Activated CD8-positive, alpha-beta T cell treated with anti-CD3 and anti-CD28 coated beads for 36 hours (primary cell): ENCODE measurements at regions of chr20 and their contacts with region 1.

Region 1: GRCh38 chr20:49610701-49611538 is 43.0 kb upstream of the PTGIS start:
- DNase-seq: peak; percentile 83
- ATAC-seq: peak; percentile 81
- H3K4me3 Mint-ChIP-seq: peak overlapping the region; percentile 31
- H3K27ac Mint-ChIP-seq: no peak overlapping the region
- H3K4me1 Mint-ChIP-seq: peaks cover 20% of the 10 kb centered on the region
- H3K27me3 Mint-ChIP-seq: peaks cover 13% of the 10 kb centered on the region
- CTCF ChIP-seq: peak; percentile 99

Region 2: DNA sequence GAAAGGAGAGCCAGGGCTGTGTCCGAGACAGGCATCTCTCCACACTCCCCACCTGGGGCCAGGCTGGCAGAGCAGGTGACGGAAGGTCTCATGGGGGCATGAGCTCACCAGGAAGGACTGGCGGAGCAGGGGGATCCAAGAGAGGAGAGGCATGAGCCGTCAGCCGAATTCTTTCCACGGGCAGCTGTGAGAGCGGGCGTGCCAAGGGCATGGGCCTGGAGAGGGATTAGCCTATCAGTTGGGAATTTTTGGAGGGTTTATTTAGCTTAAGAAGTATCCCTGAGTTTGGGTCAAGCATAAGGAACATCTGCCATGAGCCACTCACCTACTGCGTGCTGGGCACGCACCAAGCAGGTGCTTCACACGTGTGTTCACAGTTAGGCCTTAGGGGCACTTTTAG is 272.9 kb before region 1 on chr20:
- CTCF ChIA-PET with region 1: interaction called, 14 read pairs
- POLR2A ChIA-PET with region 1: no interaction called
- intact Hi-C with region 1: loop called (anchors 10 kb)
- DNase-seq: no peak
- ATAC-seq: no peak
- H3K4me3 Mint-ChIP-seq: no peak overlapping the region
- H3K27ac Mint-ChIP-seq: no peak overlapping the region
- H3K4me1 Mint-ChIP-seq: no peaks in the 10 kb centered on the region
- H3K27me3 Mint-ChIP-seq: peaks cover 5% of the 10 kb centered on the region
- CTCF ChIP-seq: no peak

Region 3: GRCh38 chr20:49490702-49491110 is 120.2 kb before region 1 on chr20:
- CTCF ChIA-PET with region 1: no interaction called
- POLR2A ChIA-PET with region 1: no interaction called
- intact Hi-C with region 1: no loop called
- DNase-seq: no peak
- ATAC-seq: no peak
- H3K4me3 Mint-ChIP-seq: no peak overlapping the region
- H3K27ac Mint-ChIP-seq: no peak overlapping the region
- H3K4me1 Mint-ChIP-seq: no peaks in the 10 kb centered on the region
- H3K27me3 Mint-ChIP-seq: peaks cover 48% of the 10 kb centered on the region
- CTCF ChIP-seq: no peak

Region 4: DNA sequence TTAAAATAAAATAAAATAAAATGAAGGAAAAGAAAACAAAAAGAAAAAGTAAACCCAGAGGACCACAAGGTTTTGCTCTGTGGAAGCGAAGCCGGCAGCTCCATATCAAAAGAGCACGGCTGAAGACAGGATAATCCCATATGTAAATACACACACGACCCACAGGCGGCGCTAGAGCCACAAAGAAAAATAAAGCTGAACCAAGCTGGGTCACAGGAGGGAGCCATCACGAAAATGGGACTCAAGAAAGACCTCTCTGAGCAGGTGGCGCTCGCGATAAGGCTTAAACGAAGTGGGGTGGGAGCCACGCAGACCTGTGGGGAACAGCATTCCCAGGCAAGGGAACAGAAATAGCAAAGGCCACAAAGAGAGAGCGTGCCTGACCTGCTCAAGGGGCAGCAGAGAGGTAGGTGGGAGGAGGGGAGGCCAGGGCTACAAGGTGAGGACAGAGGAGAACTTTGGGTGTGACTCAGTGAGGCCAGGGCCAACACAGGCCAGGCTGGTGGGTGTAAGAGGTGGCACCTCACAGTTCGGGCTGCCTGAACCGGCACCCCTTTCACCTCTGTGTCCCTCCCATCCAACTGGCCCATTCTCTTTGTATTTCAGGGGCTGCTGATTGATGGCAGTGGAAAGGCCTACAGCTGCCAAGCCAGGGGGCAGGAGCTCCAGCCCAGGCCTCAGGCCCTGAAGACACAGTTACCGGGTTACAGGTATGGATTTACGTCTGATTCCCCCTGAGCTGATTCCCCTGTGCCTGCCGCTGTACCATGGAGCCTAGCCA is 69.0 kb before region 1 on chr20:
- CTCF ChIA-PET with region 1: interaction called, 438 read pairs
- POLR2A ChIA-PET with region 1: interaction called, 12 read pairs
- intact Hi-C with region 1: loop called (anchors 2 kb)
- DNase-seq: peak; percentile 85
- ATAC-seq: peak; percentile 88
- H3K4me3 Mint-ChIP-seq: no peak overlapping the region
- H3K27ac Mint-ChIP-seq: peak overlapping the region; percentile 88
- H3K4me1 Mint-ChIP-seq: peaks cover 16% of the 10 kb centered on the region
- H3K27me3 Mint-ChIP-seq: peaks cover 13% of the 10 kb centered on the region
- CTCF ChIP-seq: peak; percentile 97

Region 5: DNA sequence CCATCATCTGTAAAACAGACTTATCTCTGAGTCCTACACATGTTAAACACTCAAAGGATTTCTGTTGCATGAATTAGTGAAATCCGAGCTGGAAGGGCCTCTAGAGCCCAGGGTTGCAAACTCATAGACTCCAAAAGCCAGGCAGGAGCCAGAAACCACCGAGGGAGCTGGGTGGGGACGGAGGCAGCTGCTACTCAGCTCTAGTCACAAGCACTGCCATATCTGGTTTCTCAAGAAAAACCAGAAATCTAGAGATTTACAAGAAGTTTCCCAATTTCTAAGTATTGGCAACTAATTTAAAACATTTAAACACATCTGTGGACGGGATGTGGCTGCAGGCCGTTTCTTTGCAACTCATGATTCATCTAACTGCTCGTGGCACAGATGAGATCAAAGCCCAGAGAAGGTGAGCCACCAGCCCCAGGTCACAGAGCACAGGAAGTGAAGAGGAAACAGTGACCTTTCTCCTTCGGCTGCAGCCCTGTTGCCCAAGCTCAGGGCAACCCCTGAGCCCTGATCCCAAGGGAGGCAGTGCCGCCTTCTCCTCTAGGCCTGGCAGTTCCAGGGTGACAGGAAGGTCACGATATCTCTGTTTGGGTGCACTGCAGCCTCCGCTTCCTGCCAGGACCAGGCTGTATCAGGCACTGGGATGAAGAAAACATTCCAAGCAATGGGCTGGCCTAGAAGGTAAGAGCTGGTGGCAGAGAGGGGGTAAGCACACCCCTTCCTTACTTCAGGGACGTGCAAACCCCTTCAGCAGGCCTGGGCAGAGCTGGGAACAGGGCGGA is 16.6 kb before region 1 on chr20:
- CTCF ChIA-PET with region 1: interaction called, 41 read pairs
- POLR2A ChIA-PET with region 1: interaction called, 10 read pairs
- intact Hi-C with region 1: no loop called
- DNase-seq: peak; percentile 94
- ATAC-seq: peak; percentile 57
- H3K4me3 Mint-ChIP-seq: peak overlapping the region; percentile 85
- H3K27ac Mint-ChIP-seq: peak overlapping the region; percentile 96
- H3K4me1 Mint-ChIP-seq: peaks cover 85% of the 10 kb centered on the region
- H3K27me3 Mint-ChIP-seq: no peaks in the 10 kb centered on the region
- CTCF ChIP-seq: no peak

Region 6: GRCh38 chr20:49656304-49656703 is 45.4 kb after region 1 on chr20:
- CTCF ChIA-PET with region 1: no interaction called
- POLR2A ChIA-PET with region 1: no interaction called
- intact Hi-C with region 1: no loop called
- DNase-seq: no peak
- ATAC-seq: no peak
- H3K4me3 Mint-ChIP-seq: no peak overlapping the region
- H3K27ac Mint-ChIP-seq: no peak overlapping the region
- H3K4me1 Mint-ChIP-seq: peaks cover 9% of the 10 kb centered on the region
- H3K27me3 Mint-ChIP-seq: no peaks in the 10 kb centered on the region
- CTCF ChIP-seq: no peak

Region 7: DNA sequence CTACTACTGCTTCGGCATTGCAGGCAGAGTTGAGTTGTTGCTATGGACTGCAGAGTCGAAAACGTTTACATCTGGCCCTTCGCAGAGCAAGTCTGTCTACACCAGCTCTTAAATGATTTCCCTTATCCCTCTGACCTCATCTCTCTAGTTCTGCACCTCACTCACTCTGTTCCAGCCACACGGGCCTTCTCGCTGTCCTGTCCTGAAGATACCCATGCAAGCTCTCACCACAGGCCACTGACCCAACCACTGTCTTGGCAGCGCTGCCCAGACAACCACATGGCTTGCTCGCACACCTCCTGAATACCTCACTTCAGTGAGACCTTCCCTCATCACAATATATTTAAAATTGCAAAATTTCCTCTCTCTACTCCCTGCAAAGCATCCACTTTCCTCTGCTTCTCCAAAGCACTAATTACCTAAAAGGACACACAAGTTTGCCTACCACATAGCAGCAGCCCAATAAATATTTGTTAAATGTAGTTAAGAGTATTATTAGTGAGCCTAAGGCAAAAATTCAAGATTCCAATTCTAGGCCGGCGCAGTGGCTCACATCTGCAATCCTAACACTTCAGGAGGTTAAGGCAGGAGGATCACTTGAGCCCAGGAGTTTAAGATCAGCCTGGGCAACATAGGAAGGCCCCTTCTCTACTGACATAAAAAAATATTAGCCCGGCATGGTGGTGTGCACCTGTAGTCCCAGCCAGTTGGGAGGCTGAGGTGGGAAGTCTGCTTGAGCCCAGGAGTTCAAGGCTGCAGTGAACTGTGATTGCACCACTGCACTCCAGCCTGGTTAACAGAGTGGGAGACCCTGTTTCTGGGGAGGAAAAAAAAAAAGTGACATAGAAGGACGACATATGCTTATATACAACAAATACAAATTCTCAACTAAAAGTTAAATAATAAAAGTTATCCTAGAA is 71.6 kb after region 1 on chr20:
- CTCF ChIA-PET with region 1: no interaction called
- POLR2A ChIA-PET with region 1: no interaction called
- intact Hi-C with region 1: no loop called
- DNase-seq: no peak
- ATAC-seq: no peak
- H3K4me3 Mint-ChIP-seq: no peak overlapping the region
- H3K27ac Mint-ChIP-seq: peak overlapping the region; percentile 35
- H3K4me1 Mint-ChIP-seq: peaks cover 44% of the 10 kb centered on the region
- H3K27me3 Mint-ChIP-seq: no peaks in the 10 kb centered on the region
- CTCF ChIP-seq: no peak

Region 8: GRCh38 chr20:49846206-49846807 is 235.4 kb after region 1 on chr20:
- CTCF ChIA-PET with region 1: interaction called, 72 read pairs
- POLR2A ChIA-PET with region 1: no interaction called
- intact Hi-C with region 1: loop called (anchors 2 kb)
- DNase-seq: peak; percentile 72
- ATAC-seq: peak; percentile 78
- H3K4me3 Mint-ChIP-seq: no peak overlapping the region
- H3K27ac Mint-ChIP-seq: no peak overlapping the region
- H3K4me1 Mint-ChIP-seq: no peaks in the 10 kb centered on the region
- H3K27me3 Mint-ChIP-seq: no peaks in the 10 kb centered on the region
- CTCF ChIP-seq: peak; percentile 76

Region 9: DNA sequence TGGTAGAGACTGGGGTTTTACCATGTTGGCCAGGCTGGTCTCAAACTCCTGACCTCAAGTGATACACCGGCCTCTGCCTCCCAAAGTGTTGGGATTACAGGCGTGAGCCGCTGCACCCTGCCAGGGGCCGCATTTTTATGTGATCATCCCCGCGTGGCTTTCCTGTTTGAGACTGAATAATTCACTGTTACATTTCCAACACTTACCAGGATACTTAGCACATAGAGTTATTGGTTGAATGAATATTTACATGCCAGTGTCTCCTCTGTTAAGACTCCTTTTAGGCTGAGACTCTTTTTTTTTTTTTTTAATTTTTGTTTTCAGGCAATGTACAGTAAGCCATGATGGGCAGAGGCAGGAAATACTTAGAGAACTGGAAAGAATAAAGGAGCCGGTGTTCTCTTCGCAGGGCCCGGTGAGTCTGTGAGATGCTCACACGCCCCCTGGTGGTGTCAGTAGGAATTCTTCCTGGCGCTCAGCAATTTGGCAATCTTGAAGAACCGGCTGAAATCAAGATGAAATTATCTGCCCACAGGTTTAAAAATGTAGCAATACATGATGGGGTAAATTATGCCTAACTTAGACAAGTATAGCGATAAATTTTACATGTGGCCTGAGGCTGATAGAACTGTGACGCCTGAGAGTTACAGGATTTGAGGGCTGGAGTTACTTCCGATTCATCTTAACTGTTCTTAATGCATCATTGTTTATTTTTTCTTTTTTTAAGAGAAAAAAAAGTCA is 317.7 kb after region 1 on chr20:
- CTCF ChIA-PET with region 1: interaction called, 4 read pairs
- POLR2A ChIA-PET with region 1: no interaction called
- intact Hi-C with region 1: loop called (anchors 10 kb)
- DNase-seq: peak; percentile 91
- ATAC-seq: peak; percentile 98
- H3K4me3 Mint-ChIP-seq: no peak overlapping the region
- H3K27ac Mint-ChIP-seq: peak overlapping the region; percentile 64
- H3K4me1 Mint-ChIP-seq: peaks cover 8% of the 10 kb centered on the region
- H3K27me3 Mint-ChIP-seq: no peaks in the 10 kb centered on the region
- CTCF ChIP-seq: peak; percentile 96

Region 10: GRCh38 chr20:50498081-50498776 is 887.3 kb after region 1 on chr20:
- CTCF ChIA-PET with region 1: no interaction called
- POLR2A ChIA-PET with region 1: no interaction called
- intact Hi-C with region 1: no loop called
- DNase-seq: no peak
- ATAC-seq: no peak
- H3K4me3 Mint-ChIP-seq: no peak overlapping the region
- H3K27ac Mint-ChIP-seq: peak overlapping the region; percentile 40
- H3K4me1 Mint-ChIP-seq: peaks cover 10% of the 10 kb centered on the region
- H3K27me3 Mint-ChIP-seq: no peaks in the 10 kb centered on the region
- CTCF ChIP-seq: no peak